Activated naive CD4-positive, alpha-beta T cell treated with anti-CD3 and anti-CD28 coated beads for 36 hours (primary cell): ENCODE measurements at regions of chr6 and their contacts with region 1.

Region 1: DNA sequence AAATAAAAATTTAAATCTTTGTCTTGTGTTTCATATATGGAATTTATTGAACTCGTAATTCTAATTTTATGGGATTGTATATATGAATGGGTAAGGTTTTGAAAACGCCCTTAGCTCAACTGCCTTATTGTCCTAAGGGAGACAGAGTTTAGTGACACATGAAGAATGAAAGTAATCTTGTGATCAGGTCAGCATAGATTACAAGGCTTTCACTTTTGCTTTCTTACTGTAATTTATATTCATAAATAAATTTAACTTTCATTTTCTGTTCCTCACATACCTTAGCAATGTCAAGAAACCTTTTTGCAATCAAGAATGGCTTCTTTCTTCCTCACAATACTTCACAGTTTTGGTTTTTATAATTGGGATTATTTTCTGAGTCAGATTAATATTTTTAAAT is 14.4 kb downstream of the KPNA5 start:
- DNase-seq: no peak
- H3K4me3 Mint-ChIP-seq: no peak overlapping the region
- H3K27ac Mint-ChIP-seq: no peak overlapping the region
- H3K4me1 Mint-ChIP-seq: peaks cover 39% of the 10 kb centered on the region
- H3K27me3 Mint-ChIP-seq: no peaks in the 10 kb centered on the region

Region 2: DNA sequence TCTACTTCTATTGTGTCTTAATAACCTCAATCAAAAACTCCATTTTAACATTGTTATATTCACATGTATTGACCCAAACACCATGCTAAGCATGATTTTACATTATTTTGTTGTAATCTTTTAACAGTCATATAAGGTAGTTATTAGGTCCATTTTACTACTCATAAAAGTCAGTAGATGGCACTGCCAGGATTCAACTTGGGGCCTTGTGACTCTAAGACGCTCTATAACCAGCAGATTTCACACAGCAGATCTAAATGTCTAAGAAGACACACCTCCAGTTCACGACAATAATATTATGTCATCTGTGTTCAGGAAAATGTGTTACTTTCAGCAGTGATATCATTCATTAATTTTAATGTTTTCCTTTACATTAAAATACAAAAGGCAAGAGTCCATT is 722.7 kb before region 1 on chr6:
- CTCF ChIA-PET with region 1: no interaction called
- intact Hi-C with region 1: no loop called
- DNase-seq: no peak
- H3K4me3 Mint-ChIP-seq: no peak overlapping the region
- H3K27ac Mint-ChIP-seq: no peak overlapping the region
- H3K4me1 Mint-ChIP-seq: no peaks in the 10 kb centered on the region
- H3K27me3 Mint-ChIP-seq: no peaks in the 10 kb centered on the region

Region 3: GRCh38 chr6:116328528-116328903 is 366.9 kb before region 1 on chr6:
- CTCF ChIA-PET with region 1: no interaction called
- intact Hi-C with region 1: no loop called
- DNase-seq: no peak
- H3K4me3 Mint-ChIP-seq: no peak overlapping the region
- H3K27ac Mint-ChIP-seq: no peak overlapping the region
- H3K4me1 Mint-ChIP-seq: no peaks in the 10 kb centered on the region
- H3K27me3 Mint-ChIP-seq: no peaks in the 10 kb centered on the region

Region 4: GRCh38 chr6:116648156-116648555 is 47.2 kb before region 1 on chr6:
- CTCF ChIA-PET with region 1: no interaction called
- intact Hi-C with region 1: no loop called
- DNase-seq: no peak
- H3K4me3 Mint-ChIP-seq: no peak overlapping the region
- H3K27ac Mint-ChIP-seq: no peak overlapping the region
- H3K4me1 Mint-ChIP-seq: peaks cover 7% of the 10 kb centered on the region
- H3K27me3 Mint-ChIP-seq: no peaks in the 10 kb centered on the region

Region 5: GRCh38 chr6:116680975-116681808 is 14.2 kb before region 1 on chr6 and contains the start of gene KPNA5:
- CTCF ChIA-PET with region 1: no interaction called
- intact Hi-C with region 1: loop called (anchors 1 kb)
- DNase-seq: peak; percentile 94
- H3K4me3 Mint-ChIP-seq: peak within 1 kb of the TSS; percentile 96
- H3K27ac Mint-ChIP-seq: peak within 1 kb of the TSS; percentile 97
- H3K4me1 Mint-ChIP-seq: peaks cover 43% of the 10 kb centered on the region
- H3K27me3 Mint-ChIP-seq: no peaks in the 10 kb centered on the region
- total RNA-seq, gene KPNA5: 8.4 to 8.9 TPM